CD4-positive, alpha-beta memory T cell (primary cell): ENCODE measurements at regions of chrX and their contacts with region 1.

Region 1: DNA sequence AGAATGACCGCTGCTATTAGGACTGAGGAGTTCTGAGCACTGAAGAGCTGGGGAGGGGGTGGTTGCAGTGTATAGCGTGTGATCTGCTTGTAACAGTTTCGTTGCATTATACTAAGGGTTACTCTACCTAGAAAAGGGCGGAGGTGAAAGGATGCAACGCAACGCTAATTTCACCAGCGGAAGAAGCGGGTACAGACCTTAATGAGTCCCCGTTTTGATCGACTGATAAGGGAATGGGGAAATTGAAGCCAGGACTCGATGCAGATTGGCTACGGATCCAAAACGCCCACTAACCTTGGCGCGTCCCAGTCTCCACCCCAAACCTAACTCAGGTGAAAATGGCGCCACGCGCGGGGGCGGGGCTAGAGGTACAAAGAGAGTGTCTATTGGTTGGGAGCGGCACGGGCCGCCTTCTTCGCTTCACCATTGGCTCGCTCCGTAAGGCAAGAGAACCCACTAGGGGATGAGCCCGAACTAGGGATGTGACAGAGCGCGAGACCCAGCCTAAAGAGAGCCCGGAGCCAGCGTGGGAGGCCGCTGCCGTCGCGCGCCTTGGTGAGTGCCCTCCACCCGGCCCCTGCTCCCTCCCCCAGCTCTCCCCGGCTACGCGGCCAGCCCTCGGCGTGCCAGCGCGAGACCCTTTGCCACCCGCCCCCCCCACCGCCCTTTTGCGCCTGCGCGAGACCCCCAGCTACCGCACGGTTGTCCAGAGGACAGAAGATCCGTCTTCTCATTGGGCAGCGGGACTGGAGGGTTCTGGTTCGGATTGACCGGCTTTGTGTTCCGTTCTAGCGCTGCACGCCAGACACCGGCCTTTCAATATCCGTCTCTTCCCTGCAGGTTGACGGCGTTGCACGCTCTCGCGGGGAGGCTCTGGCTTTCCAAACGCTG is at the start of gene EBP:
- DNase-seq: peak; percentile 91 to 97 (median 95)
- H3K4me3 ChIP-seq: peak within 1 kb of the TSS; percentile 65 to 73
- H3K4me3 Mint-ChIP-seq: peak within 1 kb of the TSS; percentile 86 to 93 (median 90)
- H3K27ac ChIP-seq: peak within 1 kb of the TSS; percentile 63
- H3K27ac Mint-ChIP-seq: peak within 1 kb of the TSS; percentile 89 to 98 (median 97)
- H3K4me1 ChIP-seq: peaks cover 28% of the 10 kb centered on the region
- H3K4me1 Mint-ChIP-seq: peaks cover 16 to 40% (median 22%) of the 10 kb centered on the region in 4 donors
- H3K27me3 ChIP-seq: no peaks in the 10 kb centered on the region
- H3K27me3 Mint-ChIP-seq: no peaks in the 10 kb centered on the region
- total RNA-seq, gene EBP: 32.1 to 35.9 TPM

Region 2: DNA sequence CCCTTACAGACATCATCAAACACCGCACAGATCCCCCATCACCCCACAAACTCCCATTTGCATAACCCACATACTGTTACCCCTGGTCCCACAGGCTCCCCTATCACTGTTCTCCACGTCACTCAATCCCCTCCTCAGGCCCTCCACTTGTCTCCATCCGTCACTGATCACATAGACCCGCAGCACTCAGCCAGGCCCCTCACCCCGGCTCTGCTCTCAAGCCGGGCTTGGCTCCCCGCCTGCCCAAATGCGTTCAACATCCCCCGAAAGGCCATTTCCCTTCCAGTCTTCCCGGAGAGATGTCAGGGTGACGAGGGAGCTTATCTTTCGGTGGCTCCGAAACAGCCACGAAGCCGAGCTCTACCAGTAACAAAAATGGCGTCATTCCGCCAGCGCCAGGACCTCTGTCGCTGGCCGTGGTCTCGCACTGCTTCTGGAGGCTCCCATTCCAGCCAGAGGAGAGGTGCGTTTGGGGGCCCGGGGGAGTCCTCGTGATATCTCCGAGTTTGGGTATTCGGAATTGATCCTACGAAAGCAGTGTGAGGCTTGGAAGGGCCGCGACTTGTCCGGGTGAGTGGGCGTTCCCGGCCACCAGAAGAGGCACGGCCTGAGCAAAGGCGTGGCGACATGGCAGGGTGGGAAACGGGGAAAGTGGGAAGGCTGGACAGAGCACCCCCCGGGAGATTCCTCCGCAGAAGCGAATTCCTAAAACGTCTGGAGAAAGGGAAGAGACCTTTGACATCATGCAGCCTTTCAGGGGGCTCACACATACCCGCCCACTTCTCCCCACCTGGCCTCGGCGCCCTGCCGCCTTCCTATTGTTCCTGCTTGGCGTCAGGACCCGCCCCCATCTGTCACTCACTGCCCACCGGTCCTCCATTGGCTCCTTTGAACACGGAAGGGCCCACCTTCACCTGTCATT is 450.3 kb before region 1 on chrX and contains the start of gene ZNF630:
- CTCF ChIA-PET with region 1: no interaction called
- POLR2A ChIA-PET with region 1: no interaction called
- intact Hi-C with region 1: loop called (anchors 5 kb)
- DNase-seq: peak; percentile 45 to 59 (median 53)
- H3K4me3 ChIP-seq: peak within 1 kb of the TSS; percentile 66 to 79
- H3K4me3 Mint-ChIP-seq: peak within 1 kb of the TSS; percentile 87 to 94 (median 90)
- H3K27ac ChIP-seq: peak within 1 kb of the TSS; percentile 58
- H3K27ac Mint-ChIP-seq: peak within 1 kb of the TSS; percentile 78 to 95 (median 91)
- H3K4me1 ChIP-seq: peaks cover 4% of the 10 kb centered on the region
- H3K4me1 Mint-ChIP-seq: peaks cover 4 to 16% (median 7%) of the 10 kb centered on the region in 4 donors
- H3K27me3 ChIP-seq: no peaks in the 10 kb centered on the region
- H3K27me3 Mint-ChIP-seq: no peaks in the 10 kb centered on the region
- total RNA-seq, gene ZNF630: 4.9 to 6.1 TPM

Region 3: DNA sequence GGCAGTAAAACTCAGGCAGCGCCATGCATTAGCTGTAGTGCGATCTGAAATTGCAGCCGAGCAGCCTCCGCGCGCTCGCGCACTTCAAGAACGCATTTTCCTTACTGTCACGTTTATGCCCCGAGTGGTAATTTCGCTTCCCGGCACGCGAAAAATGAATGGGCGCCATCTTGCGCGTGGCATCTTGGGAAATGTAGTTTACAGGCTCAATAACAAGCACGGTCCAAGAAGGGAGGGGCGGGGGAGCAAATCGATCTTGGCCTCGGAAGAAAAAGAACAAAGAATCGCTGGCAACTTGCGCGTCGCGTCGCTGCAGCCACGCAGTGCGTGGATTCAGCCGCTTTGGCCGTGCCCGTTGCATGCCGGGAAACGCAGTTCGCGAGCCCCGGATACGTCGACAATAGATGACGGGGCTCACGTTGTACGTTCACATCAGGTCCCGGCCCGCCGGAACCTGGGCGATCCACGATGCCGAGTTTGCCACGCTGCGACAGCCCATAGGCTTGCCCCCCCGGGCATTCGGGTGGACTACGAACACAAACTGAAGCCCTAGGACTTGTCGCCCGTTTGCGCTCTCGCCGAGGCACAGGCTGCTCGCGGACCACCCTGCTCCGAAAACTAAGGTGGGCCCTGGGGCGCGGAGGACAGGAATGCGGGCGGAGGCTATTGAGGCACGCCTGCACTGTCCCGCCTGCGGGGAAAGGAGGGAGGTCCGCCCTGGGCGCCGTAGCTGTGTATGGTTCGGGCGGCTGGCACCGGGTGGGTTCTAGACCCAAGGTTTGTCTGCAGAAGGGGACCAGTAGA is 45.6 kb before region 1 on chrX and contains the start of gene FTSJ1:
- CTCF ChIA-PET with region 1: no interaction called
- POLR2A ChIA-PET with region 1: interaction called, 3 read pairs
- intact Hi-C with region 1: loop called (anchors 1 kb)
- DNase-seq: peak; percentile 87 to 96 (median 92)
- H3K4me3 ChIP-seq: peak within 1 kb of the TSS; percentile 57 to 79
- H3K4me3 Mint-ChIP-seq: peak within 1 kb of the TSS; percentile 79 to 92 (median 90)
- H3K27ac ChIP-seq: peak within 1 kb of the TSS; percentile 80
- H3K27ac Mint-ChIP-seq: peak within 1 kb of the TSS; percentile 78 to 95 (median 92)
- H3K4me1 ChIP-seq: peaks cover 24% of the 10 kb centered on the region
- H3K4me1 Mint-ChIP-seq: peaks cover 16 to 24% (median 22%) of the 10 kb centered on the region in 4 donors
- H3K27me3 ChIP-seq: no peaks in the 10 kb centered on the region
- H3K27me3 Mint-ChIP-seq: no peaks in the 10 kb centered on the region
- total RNA-seq, gene FTSJ1: 48.1 to 54.1 TPM

Region 4: GRCh38 chrX:48493890-48494364 is 27.7 kb before region 1 on chrX:
- CTCF ChIA-PET with region 1: no interaction called
- POLR2A ChIA-PET with region 1: no interaction called
- intact Hi-C with region 1: no loop called
- DNase-seq: no peak
- H3K4me3 ChIP-seq: no peak overlapping the region
- H3K4me3 Mint-ChIP-seq: no peak overlapping the region
- H3K27ac ChIP-seq: no peak overlapping the region
- H3K27ac Mint-ChIP-seq: no peak overlapping the region
- H3K4me1 ChIP-seq: no peaks in the 10 kb centered on the region
- H3K4me1 Mint-ChIP-seq: no peaks in the 10 kb centered on the region
- H3K27me3 ChIP-seq: no peaks in the 10 kb centered on the region
- H3K27me3 Mint-ChIP-seq: peaks cover 0 to 2% of the 10 kb centered on the region in 2 donors

Region 5: GRCh38 chrX:48508400-48509244 is 13.0 kb before region 1 on chrX and contains the start of gene PORCN:
- CTCF ChIA-PET with region 1: no interaction called
- POLR2A ChIA-PET with region 1: interaction called, 19 read pairs
- intact Hi-C with region 1: loop called (anchors 1 kb)
- DNase-seq: peak; percentile 62 to 78 (median 65)
- H3K4me3 ChIP-seq: peak within 1 kb of the TSS; percentile 61 to 64
- H3K4me3 Mint-ChIP-seq: peak within 1 kb of the TSS; percentile 87 to 91 (median 88)
- H3K27ac ChIP-seq: peak within 1 kb of the TSS; percentile 78
- H3K27ac Mint-ChIP-seq: peak within 1 kb of the TSS; percentile 70 to 96 (median 91)
- H3K4me1 ChIP-seq: peaks cover 16% of the 10 kb centered on the region
- H3K4me1 Mint-ChIP-seq: peaks cover 10 to 23% (median 12%) of the 10 kb centered on the region in 4 donors
- H3K27me3 ChIP-seq: no peaks in the 10 kb centered on the region
- H3K27me3 Mint-ChIP-seq: no peaks in the 10 kb centered on the region
- total RNA-seq, gene PORCN: 15.3 to 15.4 TPM